MCF 10A (cell line): ENCODE measurements at regions of chr2 and their contacts with region 1.

Region 1: DNA sequence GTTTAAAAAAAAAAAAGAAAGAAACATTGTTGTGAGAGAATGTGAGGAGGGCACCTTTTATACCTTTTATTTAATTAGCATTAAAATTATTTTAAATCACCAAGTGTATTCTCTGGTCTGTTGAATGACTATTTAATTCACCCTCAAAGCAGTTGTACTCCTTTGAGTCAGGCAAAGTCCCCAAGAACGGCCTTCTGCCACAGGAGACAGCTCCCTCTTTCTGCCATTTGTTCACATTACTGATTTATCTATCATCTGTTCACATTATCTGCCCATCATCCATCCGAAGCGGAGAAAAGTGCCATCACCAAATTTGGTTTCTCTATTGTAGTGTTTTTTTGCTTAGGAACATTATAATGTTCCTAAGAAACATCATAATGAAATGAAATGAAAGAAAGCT is 240.7 kb upstream of the DPP10 start:
- DNase-seq: peak; percentile 2
- H3K4me3 Mint-ChIP-seq: no peak overlapping the region
- H3K27ac Mint-ChIP-seq: no peak overlapping the region
- H3K4me1 Mint-ChIP-seq: no peaks in the 10 kb centered on the region
- H3K27me3 Mint-ChIP-seq: peaks cover 8% of the 10 kb centered on the region
- CTCF ChIP-seq: no peak

Region 2: DNA sequence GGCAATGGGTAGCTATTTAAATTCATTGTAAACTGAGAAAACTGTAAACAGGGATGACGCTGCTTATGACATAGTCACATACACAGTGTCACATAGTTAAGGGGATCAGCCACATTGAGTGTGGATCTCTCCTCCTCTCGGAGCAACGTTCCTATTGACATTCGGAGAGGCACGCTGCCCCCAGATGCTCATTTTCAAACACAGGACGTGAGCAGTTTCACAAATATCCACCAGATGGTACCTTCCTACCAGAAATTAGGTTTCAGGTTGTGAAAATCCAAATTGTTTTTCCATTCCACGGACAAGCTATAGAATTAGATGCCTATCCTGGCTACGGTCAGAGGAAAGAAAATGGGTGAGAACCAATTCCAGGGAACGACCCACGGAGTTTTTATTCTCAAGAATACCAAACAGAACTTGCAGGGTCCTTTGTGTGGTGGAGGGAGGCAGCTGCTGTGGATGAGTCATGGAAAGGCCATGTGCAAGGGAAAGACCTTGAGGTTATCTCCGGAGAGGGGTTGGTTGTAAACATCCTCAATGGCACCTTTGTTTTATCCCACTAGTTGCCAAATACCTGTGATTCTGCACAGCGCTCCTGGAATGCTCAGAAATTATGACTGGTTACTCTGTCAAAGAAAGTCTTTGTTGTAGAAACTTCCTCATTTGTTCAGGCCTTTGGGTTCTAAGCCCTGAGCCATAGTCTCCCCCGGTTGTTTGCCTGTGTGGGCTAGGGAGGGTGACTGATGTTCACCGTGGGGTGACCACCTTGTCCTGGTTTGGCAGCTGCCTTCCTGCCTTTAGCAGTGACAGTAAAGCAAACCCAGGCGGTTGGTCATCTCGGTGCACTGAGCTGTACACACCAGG is 223.9 kb before region 1 on chr2:
- CTCF ChIA-PET with region 1: no interaction called
- POLR2A ChIA-PET with region 1: no interaction called
- intact Hi-C with region 1: loop called (anchors 5 kb)
- DNase-seq: peak; percentile 29
- H3K4me3 Mint-ChIP-seq: no peak overlapping the region
- H3K27ac Mint-ChIP-seq: no peak overlapping the region
- H3K4me1 Mint-ChIP-seq: peaks cover 6% of the 10 kb centered on the region
- H3K27me3 Mint-ChIP-seq: no peaks in the 10 kb centered on the region
- CTCF ChIP-seq: peak; percentile 46

Region 3: DNA sequence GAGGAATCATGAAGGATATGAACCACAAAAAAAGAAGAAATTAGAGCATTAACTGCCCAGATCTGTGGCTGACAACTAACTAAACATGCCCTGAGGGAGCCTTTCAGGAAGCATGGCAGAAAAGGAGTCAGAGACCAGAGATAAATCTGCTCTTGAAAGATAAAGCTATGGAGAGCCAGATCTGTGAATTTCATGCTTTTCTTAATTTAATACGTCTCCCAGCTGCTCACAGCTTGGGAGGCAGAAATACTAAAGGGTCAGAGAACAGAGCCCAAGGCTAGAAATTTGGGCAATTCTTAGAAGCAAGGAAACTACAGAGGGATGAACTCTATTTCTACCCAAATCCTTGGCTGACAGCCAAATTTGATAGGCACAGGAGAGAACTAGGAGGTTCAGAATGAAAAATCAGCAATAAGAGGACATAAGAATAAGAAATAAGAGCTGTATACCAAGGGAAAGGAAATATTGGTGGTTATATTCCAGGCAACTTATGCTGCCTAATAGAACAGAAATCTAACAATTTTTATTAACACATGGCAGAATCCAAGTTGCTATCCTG is 17.8 kb after region 1 on chr2:
- CTCF ChIA-PET with region 1: no interaction called
- POLR2A ChIA-PET with region 1: no interaction called
- intact Hi-C with region 1: no loop called
- DNase-seq: no peak
- H3K4me3 Mint-ChIP-seq: no peak overlapping the region
- H3K27ac Mint-ChIP-seq: no peak overlapping the region
- H3K4me1 Mint-ChIP-seq: no peaks in the 10 kb centered on the region
- H3K27me3 Mint-ChIP-seq: peaks cover 54% of the 10 kb centered on the region
- CTCF ChIP-seq: no peak